Spleen (tissue), 13 donors: ENCODE measurements at regions of chr13 and their contacts with region 1.

Region 1: GRCh38 chr13:84896128-84896527 is 903.1 kb downstream of the SLITRK6 start:
- DNase-seq: no peak
- H3K4me3 ChIP-seq: no peak overlapping the region
- H3K27ac ChIP-seq: no peak overlapping the region
- H3K4me1 ChIP-seq: no peaks in the 10 kb centered on the region
- H3K27me3 ChIP-seq: no peaks in the 10 kb centered on the region
- CTCF ChIP-seq: peak in 7 of 11 experiments; percentile 23 to 57 (median 50)
- POLR2A ChIP-seq: no peak

Region 2: DNA sequence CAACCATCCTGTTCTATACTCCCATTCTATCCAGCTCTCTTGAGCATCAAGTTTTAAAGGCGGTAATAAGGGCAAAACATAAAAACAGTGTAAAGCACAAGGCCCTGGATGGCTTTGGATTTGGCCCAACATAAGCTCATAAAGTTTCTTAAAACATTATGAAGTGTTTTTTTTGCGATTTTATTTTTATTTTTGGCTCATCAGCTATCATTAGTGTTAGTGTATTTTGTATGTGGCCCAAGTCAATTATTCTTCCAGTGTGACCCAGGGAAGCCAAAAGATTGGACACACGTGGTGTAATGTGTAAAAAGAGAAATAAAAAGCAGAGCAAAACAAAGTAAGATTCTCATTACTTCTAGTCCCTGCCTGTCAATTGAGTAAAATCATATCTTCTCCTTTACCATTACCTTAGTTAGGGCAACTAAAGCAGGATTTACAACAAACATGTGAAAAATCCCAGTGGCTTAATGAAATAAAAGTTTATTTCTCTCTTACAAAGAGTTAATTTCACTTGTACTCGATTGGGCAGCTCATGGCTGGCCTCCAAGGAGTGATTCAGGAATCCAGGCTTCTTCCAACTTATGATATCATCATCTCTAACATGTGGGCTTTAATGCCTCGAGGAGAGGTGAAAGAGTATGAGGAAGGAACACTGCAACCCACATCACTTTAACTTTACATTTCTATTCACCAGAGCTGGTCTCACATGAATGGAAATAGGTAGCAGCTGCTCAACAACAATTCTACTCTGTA is 288.7 kb before region 1 on chr13:
- intact Hi-C with region 1: no loop called
- DNase-seq: no peak
- H3K4me3 ChIP-seq: no peak overlapping the region
- H3K27ac ChIP-seq: no peak overlapping the region
- H3K4me1 ChIP-seq: no peaks in the 10 kb centered on the region
- H3K27me3 ChIP-seq: no peaks in the 10 kb centered on the region
- CTCF ChIP-seq: no peak
- POLR2A ChIP-seq: no peak

Region 3: DNA sequence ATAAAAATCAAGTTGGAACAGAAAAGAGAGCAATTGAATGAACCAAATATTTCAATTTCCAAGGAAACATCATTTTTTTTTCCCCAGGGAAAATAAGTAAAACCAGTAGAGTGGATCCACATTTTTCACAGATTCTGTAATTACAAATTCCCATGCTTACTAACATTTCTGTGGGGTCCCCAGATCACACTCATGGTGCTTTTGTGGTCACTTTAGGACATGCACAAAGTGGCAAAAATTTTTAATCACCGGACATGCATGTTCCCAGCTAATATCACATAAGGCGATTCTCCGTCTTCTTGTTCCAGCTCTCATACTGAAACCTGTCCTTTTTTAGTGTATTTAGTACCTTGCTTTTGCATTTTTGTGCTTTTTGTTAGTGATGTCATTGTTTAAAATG is 265.7 kb before region 1 on chr13:
- intact Hi-C with region 1: no loop called
- DNase-seq: no peak
- H3K4me3 ChIP-seq: no peak overlapping the region
- H3K27ac ChIP-seq: no peak overlapping the region
- H3K4me1 ChIP-seq: no peaks in the 10 kb centered on the region
- H3K27me3 ChIP-seq: no peaks in the 10 kb centered on the region
- CTCF ChIP-seq: no peak
- POLR2A ChIP-seq: no peak

Region 4: DNA sequence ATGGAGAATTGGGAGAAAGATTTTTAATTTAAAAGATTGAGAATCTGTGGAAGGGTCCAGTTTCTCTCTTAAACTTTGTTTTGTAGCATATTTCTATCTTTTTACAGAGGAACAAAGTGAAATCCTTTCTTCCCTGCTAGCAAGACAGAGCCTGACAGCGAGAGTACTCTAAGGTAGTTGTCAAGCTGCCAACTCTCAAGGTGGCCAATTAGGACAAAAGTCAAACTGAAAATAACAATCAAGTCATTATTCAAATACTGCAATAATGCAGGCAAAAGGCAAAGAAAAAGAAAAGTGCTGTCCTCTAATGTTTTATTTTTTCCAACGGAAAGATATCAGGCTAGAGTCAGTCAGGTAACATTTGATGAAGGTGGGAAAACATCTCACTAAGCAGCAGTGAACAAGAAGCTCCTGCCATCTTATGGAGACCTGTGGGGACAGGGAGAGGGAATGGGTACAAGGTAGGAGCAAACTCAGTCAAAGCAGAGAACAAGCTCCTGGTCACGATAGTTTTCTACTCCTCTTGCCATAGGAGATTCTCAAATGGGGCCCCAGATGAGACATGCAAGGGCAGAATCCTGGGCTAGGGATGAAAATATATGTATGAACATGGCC is 212.0 kb before region 1 on chr13:
- intact Hi-C with region 1: no loop called
- DNase-seq: no peak
- H3K4me3 ChIP-seq: no peak overlapping the region
- H3K27ac ChIP-seq: no peak overlapping the region
- H3K4me1 ChIP-seq: no peaks in the 10 kb centered on the region
- H3K27me3 ChIP-seq: no peaks in the 10 kb centered on the region
- CTCF ChIP-seq: no peak
- POLR2A ChIP-seq: no peak

Region 5: GRCh38 chr13:85040215-85040614 is 144.1 kb after region 1 on chr13:
- intact Hi-C with region 1: no loop called
- DNase-seq: no peak
- H3K4me3 ChIP-seq: no peak overlapping the region
- H3K27ac ChIP-seq: no peak overlapping the region
- H3K4me1 ChIP-seq: no peaks in the 10 kb centered on the region
- H3K27me3 ChIP-seq: no peaks in the 10 kb centered on the region
- CTCF ChIP-seq: no peak
- POLR2A ChIP-seq: no peak

Region 6: GRCh38 chr13:85806553-85807175 is 910.5 kb after region 1 on chr13:
- intact Hi-C with region 1: loop called (anchors 5 kb)
- DNase-seq: no peak
- H3K4me3 ChIP-seq: no peak overlapping the region
- H3K27ac ChIP-seq: no peak overlapping the region
- H3K4me1 ChIP-seq: no peaks in the 10 kb centered on the region
- H3K27me3 ChIP-seq: no peaks in the 10 kb centered on the region
- CTCF ChIP-seq: peak in 9 of 11 experiments; percentile 24 to 60 (median 51)
- POLR2A ChIP-seq: no peak